ENCODE measurements at regions of chr4 and their contacts with region 1.

Region 1: GRCh38 chr4:137283737-137284136 is 248.6 kb downstream of the PCDH18 start:
- DNase-seq: no peak
- H3K4me3 ChIP-seq: no peak overlapping the region
- H3K27ac ChIP-seq: no peak overlapping the region
- H3K4me1 ChIP-seq: no peaks in the 10 kb centered on the region
- H3K27me3 ChIP-seq: no peaks in the 10 kb centered on the region
- CTCF ChIP-seq: no peak; the same call in 1 of the 2 replicates

Region 2: DNA sequence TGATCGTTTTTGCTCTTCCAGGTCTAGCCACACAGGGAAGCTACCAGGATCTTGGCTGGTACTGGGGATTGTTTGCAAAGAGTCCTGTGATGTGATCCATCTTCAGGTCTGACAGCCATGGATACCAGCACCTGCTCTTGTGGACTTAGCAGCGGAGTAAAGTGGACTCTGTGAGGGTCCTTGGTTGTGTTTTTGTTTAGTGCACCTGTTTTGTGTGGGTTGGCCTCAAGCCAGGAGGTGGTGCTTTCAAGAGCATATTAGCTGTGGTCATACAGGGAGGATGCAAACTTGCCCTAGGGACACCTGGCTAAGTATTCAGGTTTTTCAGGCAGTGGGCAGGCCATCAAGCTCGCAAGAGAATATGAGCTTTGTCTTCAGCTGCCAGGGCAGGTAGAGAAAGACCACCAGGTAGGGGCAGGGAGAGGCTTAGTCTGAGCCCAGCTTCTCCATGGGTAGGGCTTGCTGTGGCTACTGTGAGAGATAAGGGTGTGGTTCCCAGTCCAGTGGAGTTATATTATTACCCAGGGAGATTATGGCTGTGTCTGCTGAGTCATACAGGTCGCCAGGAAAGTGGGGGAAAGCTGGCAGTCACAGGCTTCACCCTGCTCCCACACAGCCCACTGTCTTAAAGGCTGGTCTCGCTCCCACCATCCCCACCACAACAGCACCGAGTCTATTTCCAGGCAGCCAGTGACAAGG is 45.1 kb before region 1 on chr4:
- CTCF ChIA-PET with region 1: no interaction called
- POLR2A ChIA-PET with region 1: no interaction called
- intact Hi-C with region 1: no loop called
- DNase-seq: no peak
- H3K4me3 ChIP-seq: no peak overlapping the region
- H3K27ac ChIP-seq: no peak overlapping the region
- H3K4me1 ChIP-seq: no peaks in the 10 kb centered on the region
- H3K27me3 ChIP-seq: no peaks in the 10 kb centered on the region
- CTCF ChIP-seq: no peak

Region 3: DNA sequence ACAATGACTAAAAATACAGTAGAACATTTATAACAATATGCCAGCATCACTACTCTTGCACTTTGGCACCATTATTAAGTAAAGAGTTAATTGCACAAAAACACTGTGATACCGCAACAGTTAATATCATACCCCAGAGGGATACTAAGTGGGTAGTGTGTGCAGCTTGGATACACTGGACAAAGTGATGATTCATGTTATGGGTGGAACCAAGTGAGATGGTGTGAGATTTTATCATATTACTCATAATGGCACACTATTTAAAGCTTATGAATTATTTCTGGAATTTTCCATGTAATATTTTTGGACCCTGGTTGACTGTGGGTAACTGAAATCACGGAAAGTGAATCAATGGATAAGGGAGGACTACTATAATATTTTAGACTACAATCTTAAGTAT is 16.7 kb before region 1 on chr4:
- CTCF ChIA-PET with region 1: no interaction called
- POLR2A ChIA-PET with region 1: no interaction called
- intact Hi-C with region 1: no loop called
- DNase-seq: no peak
- H3K4me3 ChIP-seq: no peak overlapping the region
- H3K27ac ChIP-seq: no peak overlapping the region
- H3K4me1 ChIP-seq: 0 out of 2 replicates have a peak, but pooled peaks cover 5% of the 10 kb centered on the region
- H3K27me3 ChIP-seq: no peaks in the 10 kb centered on the region
- CTCF ChIP-seq: no peak

Region 4: GRCh38 chr4:137861682-137862081 is 577.9 kb after region 1 on chr4:
- CTCF ChIA-PET with region 1: no interaction called
- POLR2A ChIA-PET with region 1: no interaction called
- intact Hi-C with region 1: loop called (anchors 10 kb)
- DNase-seq: no peak
- H3K4me3 ChIP-seq: no peak overlapping the region
- H3K27ac ChIP-seq: no peak overlapping the region
- H3K4me1 ChIP-seq: no peaks in the 10 kb centered on the region
- H3K27me3 ChIP-seq: no peaks in the 10 kb centered on the region
- CTCF ChIP-seq: peak; percentile 64